Activated T-helper 2 cell treated with anti-CD3 and anti-CD28 coated beads, Interferon-gamma antibody, Interleukin-2, Interleukin-4, amounts not matched to agents 10 μg/mL and 5 μg/mL and 100 μg/mL, durations not matched to agents 14 hours and 24 hours and 36 hours (primary cell): ENCODE measurements at regions of chr14 and their contacts with region 1.

Region 1: GRCh38 chr14:58749066-58749669 is 111.4 kb downstream of the DACT1 start:
- DNase-seq: peak; percentile 27
- H3K4me3 Mint-ChIP-seq: no peak overlapping the region
- H3K27ac Mint-ChIP-seq: peak overlapping the region; percentile 21
- H3K4me1 Mint-ChIP-seq: peaks cover 15% of the 10 kb centered on the region
- H3K27me3 Mint-ChIP-seq: no peaks in the 10 kb centered on the region

Region 2: GRCh38 chr14:58668848-58669480 is 80.2 kb before region 1 on chr14:
- intact Hi-C with region 1: loop called (anchors 5 kb)
- DNase-seq: no peak
- H3K4me3 Mint-ChIP-seq: no peak overlapping the region
- H3K27ac Mint-ChIP-seq: no peak overlapping the region
- H3K4me1 Mint-ChIP-seq: peaks cover 9% of the 10 kb centered on the region
- H3K27me3 Mint-ChIP-seq: peaks cover 2% of the 10 kb centered on the region

Region 3: DNA sequence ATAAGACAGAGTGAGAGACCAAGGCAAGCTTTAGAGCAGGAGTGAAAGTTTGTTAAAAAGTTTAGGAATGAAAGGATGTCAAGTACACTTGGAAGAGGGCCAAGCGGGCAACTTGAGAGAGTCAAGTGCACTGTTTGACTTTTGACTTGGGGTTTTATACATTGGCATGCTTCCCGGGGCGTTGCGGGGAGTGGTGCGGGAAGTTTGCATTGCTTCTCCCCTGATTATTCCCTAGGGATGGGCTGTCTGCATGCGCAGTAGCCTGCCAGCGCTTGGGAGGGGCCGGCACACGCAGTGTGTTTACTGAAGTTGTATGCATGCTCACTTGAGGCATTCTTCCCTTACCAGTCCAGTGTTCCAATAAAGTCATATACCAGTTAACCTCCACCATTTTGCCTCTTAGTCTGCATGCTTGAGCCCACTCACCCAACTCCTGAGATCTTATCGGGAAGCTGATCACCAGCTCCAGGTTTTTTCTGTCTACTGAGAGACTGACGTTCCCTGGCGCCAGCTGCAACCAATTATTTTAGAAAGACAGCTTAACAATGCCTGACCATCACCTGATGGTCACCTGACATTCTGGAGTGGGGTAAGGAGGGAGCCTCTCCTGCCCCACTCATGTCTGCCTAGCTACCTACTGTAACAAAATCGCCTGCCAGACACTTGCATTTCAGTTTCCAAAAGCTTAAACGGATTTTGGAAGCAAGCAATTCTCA is 58.2 kb before region 1 on chr14:
- intact Hi-C with region 1: no loop called
- DNase-seq: no peak
- H3K4me3 Mint-ChIP-seq: no peak overlapping the region
- H3K27ac Mint-ChIP-seq: no peak overlapping the region
- H3K4me1 Mint-ChIP-seq: peaks cover 4% of the 10 kb centered on the region
- H3K27me3 Mint-ChIP-seq: no peaks in the 10 kb centered on the region

Region 4: DNA sequence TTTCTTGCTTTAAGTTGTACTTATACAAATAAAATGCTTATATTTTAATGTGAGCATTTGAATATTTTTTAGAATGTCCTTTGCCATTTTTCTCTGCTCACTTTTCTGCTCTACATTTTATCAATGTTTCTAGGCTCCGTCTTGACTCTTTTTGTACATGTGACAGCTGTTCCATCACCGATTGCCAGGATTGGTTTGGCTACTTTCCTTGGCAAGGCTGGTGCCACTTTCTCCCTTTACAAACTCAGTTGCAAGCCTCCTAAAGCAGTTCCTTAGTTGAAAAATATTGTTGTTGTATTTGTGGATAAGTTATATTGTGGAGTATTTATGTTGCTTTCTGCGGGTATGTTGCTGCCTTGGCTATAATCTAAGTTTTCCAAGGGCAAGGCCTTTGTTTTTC is 48.0 kb before region 1 on chr14:
- intact Hi-C with region 1: loop called (anchors 5 kb)
- DNase-seq: no peak
- H3K4me3 Mint-ChIP-seq: no peak overlapping the region
- H3K27ac Mint-ChIP-seq: no peak overlapping the region
- H3K4me1 Mint-ChIP-seq: peaks cover 11% of the 10 kb centered on the region
- H3K27me3 Mint-ChIP-seq: peaks cover 2% of the 10 kb centered on the region

Region 5: GRCh38 chr14:58731465-58732330 is 17.5 kb before region 1 on chr14:
- intact Hi-C with region 1: loop called (anchors 1 kb)
- DNase-seq: no peak
- H3K4me3 Mint-ChIP-seq: no peak overlapping the region
- H3K27ac Mint-ChIP-seq: no peak overlapping the region
- H3K4me1 Mint-ChIP-seq: peaks cover 26% of the 10 kb centered on the region
- H3K27me3 Mint-ChIP-seq: no peaks in the 10 kb centered on the region